Panc1 (cell line): ENCODE measurements at regions of chr11 and their contacts with region 1.

Region 1: DNA sequence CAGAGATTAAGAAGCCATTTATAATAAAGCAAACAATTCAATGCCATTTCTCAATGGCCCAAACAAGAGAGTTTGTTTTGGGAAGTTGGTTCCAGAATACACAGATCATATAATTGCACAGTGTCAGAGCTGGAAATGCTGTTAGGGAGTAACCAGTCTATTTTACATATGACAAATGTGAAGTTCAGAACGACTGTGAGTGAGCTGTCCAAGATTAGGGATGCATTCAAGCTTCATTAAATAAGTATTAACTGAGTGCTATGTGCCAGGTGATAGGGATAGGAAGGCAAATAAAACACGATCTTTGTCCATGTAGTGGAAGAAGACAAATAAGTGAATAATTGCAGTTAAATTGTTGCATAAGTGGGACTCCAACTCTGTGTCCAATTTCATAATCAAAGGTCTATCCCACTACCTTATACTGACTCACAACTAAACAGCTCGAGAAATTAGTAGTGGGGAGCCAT is 33.1 kb upstream of the PICALM start:
- DNase-seq: peak; percentile 77
- ATAC-seq: peak; percentile 90
- H3K4me3 ChIP-seq: no peak overlapping the region
- H3K27ac ChIP-seq: peak overlapping the region; percentile 1; the same call in 1 of the 2 replicates
- H3K4me1 ChIP-seq: peaks cover 12% of the 10 kb centered on the region; the same call in 1 of the 2 replicates
- H3K27me3 ChIP-seq: no peaks in the 10 kb centered on the region
- CTCF ChIP-seq: no peak

Region 2: GRCh38 chr11:86120807-86121206 is 18.8 kb after region 1 on chr11:
- CTCF ChIA-PET with region 1: no interaction called
- POLR2A ChIA-PET with region 1: no interaction called
- in situ Hi-C with region 1: no loop called
- intact Hi-C with region 1: loop called (anchors 2 kb)
- DNase-seq: no peak
- ATAC-seq: no peak
- H3K4me3 ChIP-seq: no peak overlapping the region
- H3K27ac ChIP-seq: no peak overlapping the region
- H3K4me1 ChIP-seq: peaks cover 10% of the 10 kb centered on the region; the same call in 1 of the 2 replicates
- H3K27me3 ChIP-seq: peaks cover 2% of the 10 kb centered on the region; the same call in 1 of the 2 replicates
- CTCF ChIP-seq: no peak